Mammary epithelial cell (primary cell): ENCODE measurements at regions of chr20 and their contacts with region 1.

Region 1: DNA sequence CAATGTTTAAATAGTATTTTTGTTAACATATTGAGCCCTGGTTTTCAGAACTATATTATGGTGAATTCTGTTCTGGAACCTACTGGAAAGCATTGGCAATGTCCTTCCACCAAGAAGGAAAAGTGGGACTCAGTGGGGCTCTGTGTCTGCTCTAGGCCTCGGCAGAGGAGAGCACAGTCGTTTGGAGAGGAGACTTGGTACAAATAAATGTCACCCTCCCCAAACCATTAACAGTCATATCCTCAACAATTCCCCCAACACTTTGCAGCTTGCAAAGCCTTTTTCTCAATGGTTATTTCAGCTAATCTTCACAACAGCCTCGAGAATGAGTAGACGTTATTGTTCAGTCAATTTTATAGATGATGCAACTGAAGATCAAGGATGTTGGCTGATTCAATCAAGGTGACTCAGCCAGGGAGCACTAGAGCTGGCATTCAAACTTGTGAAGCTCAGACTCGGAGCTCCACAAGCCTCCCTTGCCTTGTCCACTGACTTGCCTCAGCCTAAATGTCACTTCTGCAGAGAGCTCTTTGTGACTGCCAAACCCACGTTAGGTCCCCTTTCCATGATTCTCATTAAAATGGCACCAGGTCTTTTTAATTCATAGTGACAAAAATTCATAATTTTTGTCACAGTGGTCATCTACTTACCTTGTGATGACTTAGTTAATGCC is 60.6 kb downstream of the TOX2 start:
- DNase-seq: peak; percentile 85
- H3K4me3 ChIP-seq: no peak overlapping the region
- H3K27ac ChIP-seq: peak overlapping the region; percentile 52
- H3K4me1 ChIP-seq: peaks cover 18% of the 10 kb centered on the region
- H3K27me3 ChIP-seq: no peaks in the 10 kb centered on the region
- CTCF ChIP-seq: no peak

Region 2: DNA sequence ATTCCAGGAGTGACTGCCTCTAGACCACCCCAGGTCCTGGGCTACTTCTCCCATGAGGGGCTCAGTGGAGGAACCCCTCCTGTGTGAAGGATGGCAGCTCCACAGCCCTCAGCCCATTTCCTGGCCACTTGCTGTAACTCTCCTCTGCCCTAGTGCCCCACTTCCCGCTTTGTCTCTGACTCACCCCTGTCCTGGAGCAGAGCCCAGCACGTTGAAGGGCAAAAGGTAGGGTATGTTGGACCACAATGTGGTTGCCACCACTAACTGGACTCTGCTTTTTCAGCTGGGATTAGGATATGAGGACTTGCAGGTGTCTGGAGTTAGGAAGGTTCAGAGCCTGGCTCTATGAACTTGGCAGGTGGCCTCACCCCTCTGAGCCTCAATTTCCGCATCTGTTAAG is 305.9 kb before region 1 on chr20:
- CTCF ChIA-PET with region 1: no interaction called
- dilution Hi-C with region 1: no loop called
- in situ Hi-C with region 1: no loop called
- intact Hi-C with region 1: no loop called
- DNase-seq: peak; percentile 61
- H3K4me3 ChIP-seq: no peak overlapping the region
- H3K27ac ChIP-seq: no peak overlapping the region
- H3K4me1 ChIP-seq: peaks cover 11% of the 10 kb centered on the region
- H3K27me3 ChIP-seq: no peaks in the 10 kb centered on the region
- CTCF ChIP-seq: no peak

Region 3: DNA sequence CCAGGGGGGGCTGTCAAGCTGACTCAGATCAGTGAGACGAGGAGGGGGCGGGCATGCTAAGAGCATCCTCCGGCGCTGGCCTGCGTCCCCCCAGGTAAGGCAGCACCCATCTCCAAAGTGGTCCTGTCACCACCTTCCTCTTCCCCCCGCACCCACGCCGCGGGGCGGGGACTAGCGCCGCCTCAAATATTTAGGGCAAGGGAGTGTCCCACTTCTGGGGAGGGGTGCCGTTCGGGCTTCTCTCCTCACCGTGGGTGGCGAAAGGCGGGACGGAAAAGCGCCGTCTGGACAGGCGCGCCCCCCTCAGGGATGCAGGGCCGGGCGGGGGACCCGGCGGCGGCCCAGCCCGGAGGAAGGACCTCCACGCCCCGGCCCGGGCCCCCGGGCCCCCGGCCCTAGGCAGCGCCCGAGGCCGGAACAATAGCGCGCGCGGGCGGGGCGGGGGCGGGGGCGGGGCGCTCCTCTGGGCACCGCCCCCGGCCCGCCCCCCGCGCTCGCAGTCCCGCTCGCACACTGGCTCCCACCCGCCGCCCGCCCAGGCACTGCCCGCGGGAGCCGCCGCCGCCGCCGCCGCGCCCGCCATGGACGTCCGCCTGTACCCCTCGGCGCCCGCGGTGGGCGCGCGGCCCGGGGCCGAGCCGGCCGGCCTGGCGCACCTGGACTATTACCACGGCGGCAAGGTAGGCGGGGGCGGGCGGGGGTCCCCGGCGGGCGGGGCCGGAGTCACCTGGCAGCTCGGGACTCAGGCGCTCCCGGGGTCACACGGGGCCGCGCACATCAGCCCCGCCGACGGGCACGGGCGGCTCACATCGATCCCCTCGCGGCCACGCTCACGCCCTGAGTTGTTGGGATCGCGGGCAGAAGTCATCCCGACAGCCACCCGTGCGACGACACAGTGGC is 60.7 kb before region 1 on chr20 and contains the start of gene TOX2:
- CTCF ChIA-PET with region 1: no interaction called
- dilution Hi-C with region 1: no loop called
- in situ Hi-C with region 1: no loop called
- intact Hi-C with region 1: loop called (anchors 5 kb)
- DNase-seq: no peak
- H3K4me3 ChIP-seq: peak within 1 kb of the TSS in 2 of 3 experiments; percentile 47 to 48
- H3K27ac ChIP-seq: no peak within 1 kb of the TSS
- H3K4me1 ChIP-seq: peaks cover 16% of the 10 kb centered on the region
- H3K27me3 ChIP-seq: peaks cover 15% of the 10 kb centered on the region
- CTCF ChIP-seq: no peak
- total RNA-seq, gene TOX2: 0.83 to 5.0 TPM

Region 4: DNA sequence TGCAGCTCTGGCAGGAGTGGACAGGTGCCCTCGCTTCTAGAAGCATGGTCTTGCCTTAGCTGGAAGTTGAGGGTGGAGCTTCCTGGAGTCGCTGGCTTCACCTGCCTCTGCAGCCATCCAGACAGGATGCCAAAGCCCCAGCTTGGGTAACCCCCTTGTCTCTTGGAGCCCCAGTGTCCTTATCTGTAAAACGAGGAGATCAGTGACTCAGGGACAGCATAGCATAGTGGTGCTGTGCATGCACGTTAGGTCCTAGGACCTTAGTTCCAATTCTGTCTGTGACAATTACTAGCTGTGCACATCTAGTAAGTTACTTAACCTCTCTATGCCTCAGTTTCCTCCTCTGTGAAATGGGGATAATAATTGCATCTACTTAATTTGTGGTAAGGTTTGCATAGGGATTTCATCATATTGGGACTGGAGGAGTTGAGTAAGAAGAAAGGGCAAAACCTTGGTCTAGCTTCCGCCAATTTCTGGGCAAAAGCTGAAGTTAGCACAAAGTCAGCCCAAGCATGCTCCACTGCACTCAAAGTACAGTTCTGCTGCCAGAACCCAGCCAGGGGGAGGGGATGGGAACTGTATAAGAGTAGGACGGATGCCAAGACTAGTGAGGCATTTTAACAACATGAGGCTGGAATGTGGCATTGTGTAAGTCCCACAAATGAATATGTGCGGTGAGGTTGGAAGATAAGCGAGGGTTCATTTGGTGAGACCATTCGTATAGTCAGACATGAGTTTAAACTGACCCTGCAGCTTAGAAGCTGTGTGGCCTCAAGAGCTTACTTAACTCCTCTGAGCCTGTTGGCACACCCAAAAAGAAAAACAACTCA is 36.1 kb before region 1 on chr20:
- CTCF ChIA-PET with region 1: interaction called, 7 read pairs
- dilution Hi-C with region 1: no loop called
- in situ Hi-C with region 1: no loop called
- intact Hi-C with region 1: loop called (anchors 2 kb)
- DNase-seq: peak; percentile 96
- H3K4me3 ChIP-seq: no peak overlapping the region
- H3K27ac ChIP-seq: peak overlapping the region; percentile 11
- H3K4me1 ChIP-seq: peaks cover 65% of the 10 kb centered on the region
- H3K27me3 ChIP-seq: no peaks in the 10 kb centered on the region
- CTCF ChIP-seq: no peak

Region 5: DNA sequence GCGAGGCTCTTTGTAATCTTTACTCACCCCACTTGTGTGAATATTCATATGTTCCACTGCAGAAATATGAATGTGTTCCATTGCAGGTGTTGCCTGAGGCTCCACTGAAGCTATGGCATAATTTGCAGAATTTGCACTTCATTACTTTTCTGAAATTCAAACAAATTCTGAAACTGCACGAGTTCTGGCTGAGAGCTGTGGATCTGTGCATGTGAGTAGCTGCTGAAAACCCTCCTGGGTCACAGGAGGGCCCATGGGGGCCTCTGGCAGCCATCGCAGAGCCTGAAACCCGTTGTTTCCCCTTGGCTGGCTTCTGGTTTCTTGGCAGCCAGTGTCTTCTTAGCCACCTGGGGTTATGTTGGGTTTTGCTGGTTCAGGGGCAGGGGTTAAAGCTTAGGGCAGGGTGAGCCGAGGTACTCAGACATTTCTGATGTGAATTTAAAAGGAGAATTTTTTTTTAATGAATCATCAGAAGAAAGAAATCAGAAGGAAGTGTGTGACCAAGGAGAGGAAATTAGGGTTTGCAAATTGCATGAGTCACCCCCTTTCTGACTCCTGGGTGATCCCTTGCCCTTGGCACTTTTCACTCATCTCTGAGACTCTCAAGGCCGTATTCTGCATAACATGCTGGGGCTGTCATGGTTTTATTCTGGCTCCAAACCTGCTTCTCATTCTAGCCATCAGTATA is 20.0 kb before region 1 on chr20:
- CTCF ChIA-PET with region 1: no interaction called
- dilution Hi-C with region 1: no loop called
- in situ Hi-C with region 1: no loop called
- intact Hi-C with region 1: loop called (anchors 1 kb)
- DNase-seq: peak; percentile 89
- H3K4me3 ChIP-seq: no peak overlapping the region
- H3K27ac ChIP-seq: peak overlapping the region; percentile 40
- H3K4me1 ChIP-seq: peaks cover 36% of the 10 kb centered on the region
- H3K27me3 ChIP-seq: no peaks in the 10 kb centered on the region
- CTCF ChIP-seq: no peak